AG04450 (cell line): ENCODE measurements at regions of chr11 and their contacts with region 1.

Region 1: DNA sequence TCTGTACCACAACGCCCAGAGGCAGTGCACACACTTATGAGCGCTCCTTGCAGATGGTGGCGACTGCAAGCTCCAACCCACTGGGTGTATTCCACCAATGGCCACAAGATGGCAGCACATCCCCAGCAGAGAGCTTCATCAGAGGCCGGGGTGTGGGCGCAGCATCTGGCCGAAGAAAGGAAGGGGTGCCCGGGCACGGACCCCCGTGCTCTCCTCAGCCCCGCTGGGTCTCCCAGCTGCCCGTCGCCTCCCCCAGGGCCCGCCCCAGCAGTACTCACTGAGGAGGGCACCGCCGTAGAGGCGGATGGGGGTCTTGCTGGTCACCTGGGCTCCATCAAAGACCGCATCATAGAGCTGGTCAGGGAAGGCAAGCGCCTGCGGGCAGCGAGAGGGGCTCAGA is 14.2 kb downstream of the TP53I11 start:
- DNase-seq: peak; percentile 59
- H3K4me3 ChIP-seq: no peak overlapping the region
- H3K27ac ChIP-seq: no peak overlapping the region
- H3K27me3 ChIP-seq: peaks cover 2% of the 10 kb centered on the region
- CTCF ChIP-seq: peak; percentile 95

Region 2: GRCh38 chr11:44793350-44794090 is 143.0 kb before region 1 on chr11:
- CTCF ChIA-PET with region 1: no interaction called
- POLR2A ChIA-PET with region 1: no interaction called
- DNase-seq: no peak
- H3K4me3 ChIP-seq: no peak overlapping the region
- H3K27ac ChIP-seq: no peak overlapping the region
- H3K27me3 ChIP-seq: peaks cover 51% of the 10 kb centered on the region
- CTCF ChIP-seq: no peak

Region 3: GRCh38 chr11:44949160-44950030 is 12.9 kb after region 1 on chr11:
- CTCF ChIA-PET with region 1: interaction called, 22 read pairs
- POLR2A ChIA-PET with region 1: interaction called, 4 read pairs
- DNase-seq: no peak
- H3K4me3 ChIP-seq: peak overlapping the region; percentile 71
- H3K27ac ChIP-seq: no peak overlapping the region
- H3K27me3 ChIP-seq: peaks cover 33% of the 10 kb centered on the region
- CTCF ChIP-seq: peak; percentile 51

Region 4: GRCh38 chr11:44955015-44955738 is 18.7 kb after region 1 on chr11:
- CTCF ChIA-PET with region 1: interaction called, 21 read pairs
- POLR2A ChIA-PET with region 1: interaction called, 4 read pairs
- DNase-seq: peak; percentile 58
- H3K4me3 ChIP-seq: no peak overlapping the region
- H3K27ac ChIP-seq: peak overlapping the region; percentile 47
- H3K27me3 ChIP-seq: peaks cover 44% of the 10 kb centered on the region
- CTCF ChIP-seq: no peak

Region 5: GRCh38 chr11:45087086-45087899 is 150.8 kb after region 1 on chr11:
- CTCF ChIA-PET with region 1: interaction called, 10 read pairs
- POLR2A ChIA-PET with region 1: no interaction called
- DNase-seq: no peak
- H3K4me3 ChIP-seq: no peak overlapping the region
- H3K27ac ChIP-seq: no peak overlapping the region
- H3K27me3 ChIP-seq: peaks cover 25% of the 10 kb centered on the region
- CTCF ChIP-seq: no peak

Region 6: GRCh38 chr11:45097721-45098493 is 161.4 kb after region 1 on chr11:
- CTCF ChIA-PET with region 1: interaction called, 713 read pairs
- POLR2A ChIA-PET with region 1: interaction called, 6 read pairs
- DNase-seq: no peak
- H3K4me3 ChIP-seq: no peak overlapping the region
- H3K27ac ChIP-seq: no peak overlapping the region
- H3K27me3 ChIP-seq: peaks cover 41% of the 10 kb centered on the region
- CTCF ChIP-seq: no peak

Region 7: GRCh38 chr11:45102810-45103621 is 166.5 kb after region 1 on chr11:
- CTCF ChIA-PET with region 1: interaction called, 713 read pairs
- POLR2A ChIA-PET with region 1: interaction called, 9 read pairs
- DNase-seq: no peak
- H3K4me3 ChIP-seq: peak overlapping the region; percentile 21; the same call in 1 of the 2 replicates
- H3K27ac ChIP-seq: peak overlapping the region; percentile 11
- H3K27me3 ChIP-seq: peaks cover 30% of the 10 kb centered on the region
- CTCF ChIP-seq: peak; percentile 97

Region 8: GRCh38 chr11:45846974-45847910 is 910.7 kb after region 1 on chr11 and contains the start of gene CRY2:
- CTCF ChIA-PET with region 1: no interaction called
- POLR2A ChIA-PET with region 1: no interaction called
- DNase-seq: peak; percentile 97
- H3K4me3 ChIP-seq: peak within 1 kb of the TSS; percentile 88
- H3K27ac ChIP-seq: peak within 1 kb of the TSS; percentile 80
- H3K27me3 ChIP-seq: peaks cover 3% of the 10 kb centered on the region
- CTCF ChIP-seq: no peak
- polyA plus RNA-seq, gene CRY2: 11.7 and 13.3 TPM in 2 replicates